Transverse colon (tissue), 4 donors: ENCODE measurements at regions of chr19 and their contacts with region 1.

Region 1: GRCh38 chr19:48582168-48582567 is 24.4 kb upstream of the SPACA4 start:
- DNase-seq: no peak
- H3K4me3 ChIP-seq: no peak overlapping the region
- H3K27ac ChIP-seq: no peak overlapping the region
- H3K4me1 ChIP-seq: peaks cover 0 to 13% (median 2%) of the 10 kb centered on the region in 4 donors
- H3K27me3 ChIP-seq: peaks cover 5% of the 10 kb centered on the region
- CTCF ChIP-seq: no peak
- EP300 ChIP-seq: no peak
- POLR2A ChIP-seq: no peak

Region 2: DNA sequence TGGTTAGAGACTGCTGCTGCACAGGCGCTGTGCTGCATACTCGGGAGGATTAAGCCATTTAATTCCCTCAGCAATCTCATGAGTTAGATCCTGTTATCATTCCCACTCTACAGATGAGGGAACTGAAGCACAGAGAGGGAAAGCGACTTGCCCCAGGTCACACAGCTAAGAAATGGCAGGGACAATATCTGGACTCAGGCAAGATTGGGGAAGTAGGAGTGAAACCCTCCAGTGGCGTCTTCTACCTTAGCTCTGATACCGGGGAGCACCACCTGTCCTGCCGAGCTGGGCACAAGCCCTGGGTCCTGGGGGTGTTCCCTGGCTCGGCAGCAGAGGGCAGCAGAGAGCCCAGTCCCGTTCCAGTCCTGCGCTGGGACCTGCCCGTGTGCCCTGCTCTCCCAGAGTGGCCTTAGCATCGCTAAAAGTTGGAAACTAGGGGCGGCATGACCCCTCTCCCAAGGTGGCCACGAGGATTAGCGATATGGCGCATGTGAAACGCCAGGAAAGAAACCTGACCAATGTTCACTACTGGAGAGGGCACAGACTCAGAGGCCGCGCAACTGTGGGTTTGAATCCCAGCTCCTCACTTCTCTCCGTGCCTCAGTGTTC is 92.5 kb before region 1 on chr19:
- in situ Hi-C with region 1: no loop called
- intact Hi-C with region 1: loop called (anchors 2 kb)
- DNase-seq: peak; percentile 91
- H3K4me3 ChIP-seq: no peak overlapping the region
- H3K27ac ChIP-seq: no peak overlapping the region
- H3K4me1 ChIP-seq: peaks cover 20 to 49% (median 36%) of the 10 kb centered on the region in 4 donors
- H3K27me3 ChIP-seq: peaks cover 13% of the 10 kb centered on the region
- CTCF ChIP-seq: peak; percentile 88 to 98 (median 93)
- EP300 ChIP-seq: no peak
- POLR2A ChIP-seq: no peak

Region 3: DNA sequence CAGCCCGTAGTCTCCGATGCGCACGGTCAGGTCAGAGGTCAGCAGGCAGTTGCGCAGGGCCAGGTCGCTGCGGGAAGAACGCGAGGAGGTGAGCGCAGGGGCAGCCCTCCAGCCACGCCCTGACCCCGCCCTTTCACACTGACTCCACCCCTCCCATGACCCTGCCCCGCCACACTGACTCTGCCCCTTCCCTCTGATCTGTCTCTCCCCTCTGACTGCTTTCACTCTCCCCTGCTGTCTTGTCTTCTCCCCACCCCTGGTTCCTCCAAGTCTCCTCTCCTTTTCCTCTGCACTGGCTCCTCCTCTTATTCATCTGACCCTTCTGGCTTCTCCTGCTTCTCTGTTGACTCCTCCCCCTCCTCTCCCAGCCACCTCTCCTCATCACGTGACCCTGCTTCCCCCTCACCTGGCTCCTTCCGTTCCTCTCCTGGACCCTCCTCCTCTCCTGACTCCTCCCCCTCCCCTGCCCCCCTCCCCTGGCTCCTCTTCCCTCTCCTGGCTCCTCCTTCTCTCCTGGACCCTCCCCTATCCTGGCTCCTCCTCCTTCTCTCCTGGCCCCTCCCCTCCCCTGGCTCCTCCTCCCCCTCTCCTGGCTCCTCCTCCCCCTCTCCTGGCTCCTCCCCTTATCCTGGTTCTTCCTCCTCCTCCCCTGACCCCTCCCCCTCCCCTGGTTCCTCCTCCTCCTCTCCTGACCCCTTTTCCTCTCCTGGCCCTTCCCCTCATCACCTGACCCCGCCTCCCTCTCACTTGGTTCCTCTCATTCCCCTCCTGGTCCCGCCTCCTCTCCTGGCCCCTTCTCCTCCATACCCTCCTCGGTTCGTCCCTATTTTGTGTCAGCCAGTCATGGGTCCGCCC is 80.4 kb before region 1 on chr19:
- in situ Hi-C with region 1: loop called (anchors 5 to 10 kb)
- intact Hi-C with region 1: no loop called
- DNase-seq: peak; percentile 92
- H3K4me3 ChIP-seq: peak overlapping the region in 2 of 4 donors; percentile 11 to 32
- H3K27ac ChIP-seq: peak overlapping the region in 1 of 4 donors; percentile 29
- H3K4me1 ChIP-seq: peaks cover 0 to 22% (median 11%) of the 10 kb centered on the region in 4 donors
- H3K27me3 ChIP-seq: peaks cover 49% of the 10 kb centered on the region
- CTCF ChIP-seq: no peak
- EP300 ChIP-seq: no peak
- POLR2A ChIP-seq: no peak